GM12878 (cell line): ENCODE measurements at regions of chr20 and their contacts with region 1.

Region 1: DNA sequence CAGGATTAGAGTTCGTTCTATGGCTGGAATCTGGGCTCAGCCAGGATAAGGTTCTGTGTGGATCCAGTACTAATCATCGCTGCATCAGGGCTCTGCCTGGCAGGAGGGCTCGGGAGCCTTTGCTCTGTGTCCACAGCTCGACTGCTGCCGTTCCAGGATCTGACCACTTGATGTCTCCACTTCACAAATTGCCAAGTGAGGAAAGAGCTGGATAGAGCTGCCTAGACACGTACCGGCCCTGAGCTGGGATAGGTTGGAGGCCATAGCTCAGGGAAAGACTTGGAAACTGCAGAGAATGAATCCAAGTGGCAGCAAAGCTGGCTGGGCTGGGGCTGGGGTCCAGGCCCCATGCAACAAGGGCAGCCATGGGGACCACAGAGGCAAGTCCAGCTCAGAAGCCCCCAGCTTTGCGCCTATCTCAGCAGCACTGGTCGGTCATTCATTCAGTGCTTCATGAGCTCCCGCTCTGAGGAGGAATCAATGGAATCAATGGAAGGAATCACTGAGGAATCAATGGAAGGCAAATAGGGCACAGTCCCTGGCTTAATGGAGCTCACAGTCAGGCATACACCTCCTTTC is 38.0 kb upstream of the TOP1 start:
- DNase-seq: peak; percentile 70
- ATAC-seq: peak; percentile 87
- H3K4me3 ChIP-seq: peak overlapping the region; percentile 33; the same call in 1 of the 2 replicates
- H3K27ac ChIP-seq: peak overlapping the region; percentile 98
- H3K4me1 ChIP-seq: peaks cover 39% of the 10 kb centered on the region
- H3K27me3 ChIP-seq: no peaks in the 10 kb centered on the region
- CTCF ChIP-seq: peak; percentile 85 to 95 (median 90)
- EP300 ChIP-seq: no peak
- POLR2A ChIP-seq: no peak
- RAD21 ChIP-seq: peak; percentile 96

Region 2: DNA sequence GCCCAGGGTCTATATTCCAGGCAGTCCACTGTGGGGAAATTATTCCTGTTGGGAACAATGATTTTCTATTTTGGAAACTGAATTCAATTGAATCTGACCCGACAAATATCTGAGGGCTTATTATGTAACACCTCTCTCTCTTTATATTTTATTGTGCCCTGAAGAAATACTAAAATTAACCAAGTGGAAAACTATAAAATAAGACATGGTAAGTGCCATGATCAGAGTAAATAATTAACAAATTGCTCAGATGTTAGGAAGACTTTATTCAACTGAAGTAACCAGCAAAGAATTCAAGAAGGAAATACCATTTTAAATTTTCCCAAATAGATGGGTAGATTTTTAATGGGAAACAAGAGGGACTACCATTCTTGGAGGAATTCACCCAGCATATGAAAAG is 934.5 kb before region 1 on chr20:
- CTCF ChIA-PET with region 1: no interaction called
- POLR2A ChIA-PET with region 1: no interaction called
- RAD21 ChIA-PET with region 1: no interaction called
- SMC1A ChIA-PET with region 1: no interaction called
- in situ Hi-C with region 1: no loop called
- intact Hi-C with region 1: no loop called
- DNase-seq: no peak
- ATAC-seq: no peak
- H3K4me3 ChIP-seq: no peak overlapping the region
- H3K27ac ChIP-seq: no peak overlapping the region
- H3K4me1 ChIP-seq: no peaks in the 10 kb centered on the region
- H3K27me3 ChIP-seq: no peaks in the 10 kb centered on the region
- CTCF ChIP-seq: no peak
- EP300 ChIP-seq: no peak
- POLR2A ChIP-seq: no peak
- RAD21 ChIP-seq: no peak

Region 3: GRCh38 chr20:40583205-40583604 is 407.4 kb before region 1 on chr20:
- CTCF ChIA-PET with region 1: no interaction called
- POLR2A ChIA-PET with region 1: no interaction called
- RAD21 ChIA-PET with region 1: no interaction called
- SMC1A ChIA-PET with region 1: no interaction called
- in situ Hi-C with region 1: no loop called
- intact Hi-C with region 1: no loop called
- DNase-seq: no peak
- ATAC-seq: no peak
- H3K4me3 ChIP-seq: no peak overlapping the region
- H3K27ac ChIP-seq: no peak overlapping the region
- H3K4me1 ChIP-seq: no peaks in the 10 kb centered on the region
- H3K27me3 ChIP-seq: peaks cover 0 to 2% of the 10 kb centered on the region in 2 experiments; a peak in 1 of 4 replicates
- CTCF ChIP-seq: no peak
- EP300 ChIP-seq: no peak
- POLR2A ChIP-seq: no peak
- RAD21 ChIP-seq: no peak

Region 4: DNA sequence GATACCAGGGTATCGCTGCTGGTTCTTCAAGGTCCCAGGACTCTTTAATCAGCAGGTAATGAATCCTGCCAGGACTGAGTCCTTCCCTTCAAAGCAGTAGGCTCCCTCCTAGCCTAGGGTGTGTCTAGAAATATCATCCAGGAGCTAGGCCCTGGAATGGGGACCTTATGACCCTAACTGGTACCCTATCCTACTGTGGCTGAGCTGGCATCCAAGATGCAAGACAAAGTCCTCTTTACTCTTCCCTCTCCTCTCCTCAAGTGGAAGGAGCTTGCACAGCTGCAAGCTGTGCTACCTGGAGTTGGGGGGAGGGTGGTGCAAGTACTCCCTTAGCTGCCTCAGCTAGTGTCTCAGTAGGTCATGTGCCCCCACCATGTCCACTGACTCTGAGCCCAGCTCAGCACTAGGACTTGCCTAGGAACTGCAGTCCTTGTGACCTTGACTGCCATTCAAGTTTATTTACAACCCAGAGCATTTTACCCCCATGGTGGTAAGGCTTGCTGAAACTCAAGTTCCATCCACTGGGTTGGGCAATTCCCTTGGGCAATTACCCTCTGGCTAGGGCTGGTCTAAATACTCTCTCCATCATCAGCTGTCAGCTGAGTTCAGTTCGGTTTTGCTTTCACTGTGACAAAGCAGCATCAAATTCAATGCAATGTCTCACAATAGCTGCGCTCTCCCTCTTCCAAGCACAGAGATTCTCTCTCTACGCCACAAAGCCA is 10.4 kb before region 1 on chr20:
- CTCF ChIA-PET with region 1: interaction called, 114 read pairs
- POLR2A ChIA-PET with region 1: interaction called, 57 read pairs
- RAD21 ChIA-PET with region 1: interaction called, 148 read pairs
- SMC1A ChIA-PET with region 1: interaction called, 150 read pairs
- in situ Hi-C with region 1: no loop called
- intact Hi-C with region 1: no loop called
- DNase-seq: peak; percentile 83
- ATAC-seq: peak; percentile 86
- H3K4me3 ChIP-seq: peak overlapping the region; percentile 20; the same call in 1 of the 2 replicates
- H3K27ac ChIP-seq: peak overlapping the region; percentile 75
- H3K4me1 ChIP-seq: peaks cover 32% of the 10 kb centered on the region
- H3K27me3 ChIP-seq: no peaks in the 10 kb centered on the region
- CTCF ChIP-seq: no peak
- EP300 ChIP-seq: peak; percentile 6 to 48; a peak in 2 of 4 replicates
- POLR2A ChIP-seq: 0 out of 2 replicates have a peak, but pooled peaks have one; percentile 39
- RAD21 ChIP-seq: 0 out of 2 replicates have a peak, but pooled peaks have one; percentile 23

Region 5: DNA sequence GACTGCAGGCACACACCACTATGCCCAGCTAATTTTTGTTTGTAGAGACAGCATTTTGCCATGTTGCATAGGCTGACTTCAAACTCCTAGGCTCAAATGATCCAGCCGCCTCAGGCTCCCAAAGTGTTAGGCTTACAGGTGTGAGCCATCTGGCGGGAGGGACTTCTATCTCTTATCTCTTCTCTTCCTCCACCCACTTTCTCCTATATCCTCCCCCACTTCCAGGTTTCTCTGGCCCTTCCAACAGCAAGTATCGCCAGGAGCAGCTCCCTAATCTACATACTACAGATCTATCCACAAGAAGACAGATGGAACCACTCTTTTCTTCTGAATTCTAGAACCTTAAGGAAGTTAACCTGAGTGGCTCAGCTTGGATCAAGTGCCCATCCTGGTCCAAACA is 32.9 kb after region 1 on chr20:
- CTCF ChIA-PET with region 1: interaction called, 10 read pairs
- POLR2A ChIA-PET with region 1: interaction called, 11 read pairs
- RAD21 ChIA-PET with region 1: interaction called, 696 read pairs
- SMC1A ChIA-PET with region 1: interaction called, 43 read pairs
- in situ Hi-C with region 1: no loop called
- intact Hi-C with region 1: loop called (anchors 1 kb)
- DNase-seq: no peak
- ATAC-seq: no peak
- H3K4me3 ChIP-seq: no peak overlapping the region
- H3K27ac ChIP-seq: no peak overlapping the region
- H3K4me1 ChIP-seq: peaks cover 9% of the 10 kb centered on the region
- H3K27me3 ChIP-seq: no peaks in the 10 kb centered on the region
- CTCF ChIP-seq: no peak
- EP300 ChIP-seq: no peak
- POLR2A ChIP-seq: no peak
- RAD21 ChIP-seq: no peak

Region 6: DNA sequence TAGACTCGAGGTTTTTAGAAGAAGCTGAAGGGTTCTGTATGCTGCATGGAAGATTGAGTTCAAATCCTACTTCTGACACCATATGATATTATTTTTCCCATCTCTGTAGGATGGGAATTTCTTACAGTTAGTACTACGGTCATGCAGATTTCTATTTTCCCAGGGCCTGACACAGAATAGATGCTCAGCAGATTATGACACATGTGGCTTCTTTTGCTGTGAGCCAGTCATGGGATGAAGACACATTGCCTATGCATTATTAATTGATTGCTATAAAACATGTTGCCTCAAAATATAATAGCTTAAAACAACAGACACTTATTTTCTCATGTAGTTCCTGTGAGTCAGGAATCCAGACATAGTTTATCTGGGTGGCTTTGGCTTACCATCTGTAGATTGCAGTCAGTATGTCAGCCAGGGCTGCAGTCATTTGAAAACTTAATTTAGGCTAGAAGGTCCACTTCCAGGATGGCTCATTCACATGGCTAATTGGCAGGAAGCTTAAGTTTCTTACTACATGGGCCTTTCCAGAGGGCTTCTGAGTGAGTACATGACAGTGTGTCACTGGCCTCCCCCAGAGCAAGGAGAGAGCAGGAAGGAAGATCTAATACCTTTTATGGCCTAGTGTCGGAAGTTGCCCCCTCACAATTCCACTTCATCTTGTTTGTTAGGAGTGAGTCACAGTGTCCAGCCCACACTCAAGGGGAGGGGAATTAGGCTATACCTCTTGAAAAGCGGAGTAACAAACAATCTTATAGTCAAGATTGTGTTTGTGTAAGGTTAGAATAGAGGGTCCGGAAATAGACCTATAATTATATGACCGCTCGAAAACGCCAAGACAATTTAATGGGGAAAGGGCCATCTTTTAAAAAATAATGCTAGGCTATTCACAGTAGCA is 67.6 kb after region 1 on chr20:
- CTCF ChIA-PET with region 1: interaction called, 510 read pairs
- POLR2A ChIA-PET with region 1: interaction called, 33 read pairs
- RAD21 ChIA-PET with region 1: interaction called, 696 read pairs
- SMC1A ChIA-PET with region 1: interaction called, 456 read pairs
- in situ Hi-C with region 1: no loop called
- intact Hi-C with region 1: no loop called
- DNase-seq: no peak
- ATAC-seq: peak; percentile 76
- H3K4me3 ChIP-seq: no peak overlapping the region
- H3K27ac ChIP-seq: no peak overlapping the region
- H3K4me1 ChIP-seq: peaks cover 8% of the 10 kb centered on the region
- H3K27me3 ChIP-seq: no peaks in the 10 kb centered on the region
- CTCF ChIP-seq: no peak
- EP300 ChIP-seq: no peak
- POLR2A ChIP-seq: no peak
- RAD21 ChIP-seq: no peak

Region 7: GRCh38 chr20:41086402-41087338 is 96.0 kb after region 1 on chr20:
- CTCF ChIA-PET with region 1: interaction called, 326 read pairs
- POLR2A ChIA-PET with region 1: interaction called, 3 read pairs
- RAD21 ChIA-PET with region 1: interaction called, 51 read pairs
- SMC1A ChIA-PET with region 1: interaction called, 120 read pairs
- in situ Hi-C with region 1: no loop called
- intact Hi-C with region 1: no loop called
- DNase-seq: no peak
- ATAC-seq: no peak
- H3K4me3 ChIP-seq: no peak overlapping the region
- H3K27ac ChIP-seq: no peak overlapping the region
- H3K4me1 ChIP-seq: no peaks in the 10 kb centered on the region
- H3K27me3 ChIP-seq: no peaks in the 10 kb centered on the region
- CTCF ChIP-seq: no peak
- EP300 ChIP-seq: no peak
- POLR2A ChIP-seq: no peak
- RAD21 ChIP-seq: no peak

Region 8: DNA sequence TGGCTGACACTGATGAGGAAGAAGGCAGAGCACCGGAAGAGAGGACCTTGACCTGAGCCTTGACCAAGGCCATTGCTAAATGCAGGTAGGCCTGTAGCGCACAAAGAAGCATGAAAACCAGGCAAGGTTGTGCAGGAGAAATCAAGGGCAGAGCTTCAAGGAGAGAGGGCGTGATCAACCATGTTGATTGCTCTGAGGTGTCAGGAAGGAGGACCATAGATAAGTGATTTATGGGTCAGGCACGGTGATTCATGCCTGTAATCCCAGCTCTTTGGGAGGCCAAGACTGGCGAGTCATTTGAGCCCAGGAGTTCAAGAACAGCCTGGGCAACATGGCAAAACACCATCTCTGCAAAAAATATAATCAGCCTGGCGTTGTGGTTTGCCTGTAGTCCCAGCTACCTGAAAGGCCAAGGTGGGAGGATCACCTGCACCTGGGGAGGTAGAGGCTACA is 159.1 kb after region 1 on chr20:
- CTCF ChIA-PET with region 1: interaction called, 19 read pairs
- POLR2A ChIA-PET with region 1: no interaction called
- RAD21 ChIA-PET with region 1: no interaction called
- SMC1A ChIA-PET with region 1: no interaction called
- in situ Hi-C with region 1: no loop called
- intact Hi-C with region 1: no loop called
- DNase-seq: no peak
- ATAC-seq: no peak
- H3K4me3 ChIP-seq: no peak overlapping the region
- H3K27ac ChIP-seq: no peak overlapping the region
- H3K4me1 ChIP-seq: peaks cover 19% of the 10 kb centered on the region
- H3K27me3 ChIP-seq: no peaks in the 10 kb centered on the region
- CTCF ChIP-seq: no peak
- EP300 ChIP-seq: no peak
- POLR2A ChIP-seq: no peak
- RAD21 ChIP-seq: no peak